Left ventricle myocardium inferior (tissue), 1 donor: ENCODE measurements at regions of chr11 and their contacts with region 1.

Region 1: DNA sequence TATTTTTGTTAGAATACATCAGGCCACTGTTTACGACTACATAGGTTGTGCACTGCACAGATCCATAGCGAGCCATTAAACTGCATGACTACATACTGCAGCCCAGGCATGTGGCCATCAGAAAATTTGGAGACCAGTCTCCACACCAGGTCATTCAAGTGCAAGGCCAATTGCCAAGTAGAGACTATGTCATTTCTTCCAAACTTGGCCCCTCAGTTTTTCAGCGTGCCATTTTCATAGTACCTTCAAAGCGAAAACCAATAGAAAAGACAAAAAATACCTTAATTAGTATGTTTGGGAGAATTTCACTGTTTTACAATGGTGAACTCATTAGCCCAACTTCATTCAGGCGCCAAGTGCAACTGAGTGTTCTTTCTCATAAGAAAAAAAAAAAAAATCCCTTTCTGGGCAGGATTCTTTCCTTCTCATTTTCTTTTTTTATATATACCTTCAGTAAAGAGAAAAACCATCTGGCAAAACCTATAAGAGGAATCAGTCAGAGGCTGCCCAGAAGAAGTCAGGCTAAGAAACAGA is 30.4 kb downstream of the PAMR1 start:
- DNase-seq: no peak
- H3K4me3 ChIP-seq: no peak overlapping the region
- H3K27ac ChIP-seq: no peak overlapping the region
- H3K4me1 ChIP-seq: no peaks in the 10 kb centered on the region
- H3K27me3 ChIP-seq: peaks cover 26% of the 10 kb centered on the region
- CTCF ChIP-seq: no peak

Region 2: DNA sequence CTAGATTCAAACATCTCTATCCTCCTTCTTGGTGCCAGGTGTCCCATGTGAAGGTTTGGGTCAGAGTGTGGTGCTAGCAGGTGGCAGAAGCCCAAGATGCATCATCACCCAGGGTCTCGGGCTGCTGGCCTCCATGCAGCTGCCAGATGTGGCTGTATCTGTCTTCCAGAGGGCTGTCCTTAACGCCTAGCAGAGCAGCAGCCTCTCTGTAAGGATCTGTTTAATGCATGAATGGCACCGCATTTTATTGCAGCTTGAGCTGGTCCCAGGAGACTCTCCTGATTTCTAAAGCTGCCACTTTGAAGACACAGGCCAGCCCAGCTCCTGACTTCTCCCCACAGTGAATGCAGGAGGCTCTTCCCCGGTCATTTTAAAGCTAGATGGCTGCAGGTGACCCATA is 101.9 kb before region 1 on chr11:
- intact Hi-C with region 1: no loop called
- DNase-seq: no peak
- H3K4me3 ChIP-seq: no peak overlapping the region
- H3K27ac ChIP-seq: no peak overlapping the region
- H3K4me1 ChIP-seq: peaks cover 9% of the 10 kb centered on the region
- H3K27me3 ChIP-seq: peaks cover 7% of the 10 kb centered on the region
- CTCF ChIP-seq: no peak

Region 3: DNA sequence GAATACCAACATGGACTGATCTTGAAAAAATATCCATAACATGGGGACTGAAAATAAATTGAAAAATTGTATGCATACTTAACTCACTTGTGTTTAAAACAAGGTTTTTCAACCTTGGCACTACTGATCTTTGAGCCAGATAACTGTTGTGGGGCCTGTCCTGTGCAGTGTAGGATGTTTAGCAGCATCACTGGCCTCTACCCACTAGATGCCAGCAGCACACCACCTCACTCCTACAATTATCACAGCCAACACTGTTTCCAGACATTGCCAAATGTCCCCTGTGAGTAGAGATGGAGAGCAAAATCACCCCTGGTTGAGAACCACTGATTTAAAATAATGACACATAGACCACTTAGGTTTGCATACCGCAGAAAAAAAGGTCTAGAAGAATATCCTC is 30.7 kb before region 1 on chr11:
- intact Hi-C with region 1: loop called (anchors 2 kb)
- DNase-seq: no peak
- H3K4me3 ChIP-seq: no peak overlapping the region
- H3K27ac ChIP-seq: no peak overlapping the region
- H3K4me1 ChIP-seq: no peaks in the 10 kb centered on the region
- H3K27me3 ChIP-seq: peaks cover 31% of the 10 kb centered on the region
- CTCF ChIP-seq: no peak